Breast epithelium (tissue), 4 donors: ENCODE measurements at regions of chr3 and their contacts with region 1.

Region 1: GRCh38 chr3:116399701-116400226 is 45.5 kb downstream of the LSAMP start:
- DNase-seq: no peak
- H3K4me3 ChIP-seq: no peak overlapping the region
- H3K27ac ChIP-seq: no peak overlapping the region
- H3K4me1 ChIP-seq: no peaks in the 10 kb centered on the region
- H3K27me3 ChIP-seq: no peaks in the 10 kb centered on the region
- CTCF ChIP-seq: no peak
- POLR2A ChIP-seq: no peak

Region 2: GRCh38 chr3:117941756-117942155 is 1542.0 kb after region 1 on chr3:
- intact Hi-C with region 1: loop called (anchors 5 kb)
- DNase-seq: no peak
- H3K4me3 ChIP-seq: no peak overlapping the region
- H3K27ac ChIP-seq: no peak overlapping the region
- H3K4me1 ChIP-seq: no peaks in the 10 kb centered on the region
- H3K27me3 ChIP-seq: no peaks in the 10 kb centered on the region
- CTCF ChIP-seq: no peak
- POLR2A ChIP-seq: no peak